ENCODE measurements at regions of chr2 and their contacts with region 1.

Region 1: GRCh38 chr2:101725515-101726192 is 28.1 kb downstream of the MAP4K4 start:
- DNase-seq: peak; percentile 56
- H3K4me3 Mint-ChIP-seq: no peak overlapping the region
- H3K27ac Mint-ChIP-seq: no peak overlapping the region
- H3K4me1 Mint-ChIP-seq: peaks cover 48% of the 10 kb centered on the region
- H3K27me3 Mint-ChIP-seq: no peaks in the 10 kb centered on the region
- CTCF ChIP-seq: no peak

Region 2: GRCh38 chr2:101736861-101737291 is 11.2 kb after region 1 on chr2:
- CTCF ChIA-PET with region 1: interaction called, 4 read pairs
- POLR2A ChIA-PET with region 1: interaction called, 11 read pairs
- intact Hi-C with region 1: no loop called
- DNase-seq: peak; percentile 91
- H3K4me3 Mint-ChIP-seq: peak overlapping the region; percentile 37
- H3K27ac Mint-ChIP-seq: peak overlapping the region; percentile 83
- H3K4me1 Mint-ChIP-seq: peaks cover 67% of the 10 kb centered on the region
- H3K27me3 Mint-ChIP-seq: no peaks in the 10 kb centered on the region
- CTCF ChIP-seq: no peak

Region 3: DNA sequence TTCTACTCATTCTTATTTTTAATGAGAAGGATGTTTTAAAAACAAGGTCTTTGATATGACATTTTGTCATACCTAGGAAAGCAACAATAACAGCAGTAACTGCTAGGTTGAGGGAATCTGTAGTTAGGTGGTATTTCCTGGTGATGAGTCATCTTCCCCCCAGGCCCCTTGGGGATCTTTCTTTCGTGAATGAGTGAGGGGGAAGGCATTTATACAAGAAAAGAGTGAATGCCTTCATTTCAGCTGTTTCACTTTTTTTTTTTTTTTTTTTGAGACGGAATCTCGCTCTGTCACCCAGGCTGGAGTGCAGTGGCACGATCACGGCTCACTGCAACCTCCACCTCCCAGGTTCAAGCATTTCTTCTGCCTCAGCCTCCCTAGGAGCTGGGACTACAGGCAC is 80.5 kb after region 1 on chr2:
- CTCF ChIA-PET with region 1: no interaction called
- POLR2A ChIA-PET with region 1: no interaction called
- intact Hi-C with region 1: no loop called
- DNase-seq: peak; percentile 69
- H3K4me3 Mint-ChIP-seq: peak overlapping the region; percentile 43
- H3K27ac Mint-ChIP-seq: peak overlapping the region; percentile 87
- H3K4me1 Mint-ChIP-seq: peaks cover 51% of the 10 kb centered on the region
- H3K27me3 Mint-ChIP-seq: no peaks in the 10 kb centered on the region
- CTCF ChIP-seq: no peak

Measured in MCF 10A (cell line).